ENCODE measurements at regions of chr6 and their contacts with region 1.

Region 1: GRCh38 chr6:169950558-169950957 is 199.1 kb downstream of the ERMARD start:
- DNase-seq: peak; percentile 23
- H3K4me3 ChIP-seq: no peak overlapping the region
- H3K27ac ChIP-seq: no peak overlapping the region
- H3K4me1 ChIP-seq: no peaks in the 10 kb centered on the region
- H3K27me3 ChIP-seq: no peaks in the 10 kb centered on the region
- CTCF ChIP-seq: peak; percentile 53

Region 2: DNA sequence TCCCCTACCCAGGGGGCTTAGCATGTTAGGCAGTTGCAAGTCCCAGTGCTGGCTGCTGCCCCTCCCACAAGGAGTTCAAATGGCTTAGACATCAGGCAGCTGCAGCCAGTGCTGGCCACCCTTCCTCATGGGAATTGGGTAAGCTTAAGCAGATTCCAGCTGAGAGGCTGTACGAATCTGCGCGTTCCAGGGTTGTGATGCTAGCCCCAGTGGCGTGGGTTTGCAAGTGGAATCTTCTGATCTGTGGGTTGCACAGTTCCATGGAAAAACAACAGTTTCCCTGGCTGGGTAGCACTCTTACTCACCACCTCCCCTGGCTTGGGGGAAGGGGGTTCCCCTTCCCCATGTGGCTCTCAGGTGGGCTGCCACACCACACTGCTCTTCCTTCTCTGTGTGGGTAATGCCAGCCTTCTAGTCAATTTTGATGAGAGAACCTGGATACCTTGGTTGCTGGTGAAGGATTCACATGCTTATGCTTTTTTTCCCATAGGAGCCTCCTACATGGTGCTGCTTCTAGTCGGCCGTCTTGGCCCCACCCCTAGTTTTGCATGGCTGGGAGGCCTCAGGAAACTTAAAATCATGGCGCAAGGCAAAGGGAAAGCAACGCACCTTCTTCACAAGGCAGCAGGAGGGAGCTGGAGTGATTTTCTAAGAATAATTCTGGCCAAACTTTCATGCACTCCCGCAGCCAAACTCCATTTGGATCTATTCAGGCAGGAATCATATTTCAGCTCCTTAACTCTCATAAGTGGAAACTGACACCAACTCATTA is 212.2 kb before region 1 on chr6:
- CTCF ChIA-PET with region 1: no interaction called
- POLR2A ChIA-PET with region 1: interaction called, 11 read pairs
- intact Hi-C with region 1: no loop called
- DNase-seq: no peak
- H3K4me3 ChIP-seq: no peak overlapping the region
- H3K27ac ChIP-seq: no peak overlapping the region
- H3K4me1 ChIP-seq: peaks cover 8% of the 10 kb centered on the region
- H3K27me3 ChIP-seq: no peaks in the 10 kb centered on the region
- CTCF ChIP-seq: no peak

Measured in A673 (cell line).